ENCODE measurements at regions of chr2 and their contacts with region 1.

Region 1: DNA sequence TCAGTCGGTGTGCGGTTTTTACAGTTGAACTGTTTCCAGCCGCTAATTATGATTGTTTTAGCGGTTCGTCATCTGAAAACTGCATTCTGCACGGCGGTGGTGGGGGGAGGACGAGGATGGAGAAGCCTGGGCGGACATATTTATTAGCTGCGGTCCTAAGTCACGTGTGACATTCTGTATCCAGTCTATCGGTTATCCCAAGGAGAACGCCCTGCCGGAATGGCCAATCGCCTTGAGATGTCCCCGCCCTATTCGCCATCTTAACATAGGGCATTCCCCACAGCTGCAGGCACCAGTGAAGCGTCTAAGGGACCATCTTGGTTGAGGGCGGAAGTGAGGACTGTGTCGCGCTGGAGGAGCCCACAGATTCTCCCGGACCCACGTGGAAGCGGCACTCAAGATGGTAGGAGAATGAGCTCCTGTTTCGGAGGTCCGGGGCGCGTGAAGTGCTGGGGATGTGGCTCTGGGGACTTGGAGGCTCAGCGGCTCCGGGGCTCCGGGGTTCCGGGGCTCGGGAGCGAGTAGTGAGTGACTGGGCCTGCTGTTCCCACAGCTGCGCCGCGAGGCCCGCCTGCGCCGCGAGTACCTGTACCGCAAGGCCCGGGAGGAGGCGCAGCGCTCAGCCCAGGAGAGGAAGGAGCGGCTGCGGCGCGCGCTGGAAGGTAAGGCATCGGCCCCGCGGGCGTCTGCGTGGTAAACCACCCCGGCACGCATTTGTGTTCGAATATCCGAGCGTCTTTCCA is at the start of gene IMP4:
- DNase-seq: peak; percentile 94
- CTCF ChIP-seq: peak; percentile 49

Region 2: DNA sequence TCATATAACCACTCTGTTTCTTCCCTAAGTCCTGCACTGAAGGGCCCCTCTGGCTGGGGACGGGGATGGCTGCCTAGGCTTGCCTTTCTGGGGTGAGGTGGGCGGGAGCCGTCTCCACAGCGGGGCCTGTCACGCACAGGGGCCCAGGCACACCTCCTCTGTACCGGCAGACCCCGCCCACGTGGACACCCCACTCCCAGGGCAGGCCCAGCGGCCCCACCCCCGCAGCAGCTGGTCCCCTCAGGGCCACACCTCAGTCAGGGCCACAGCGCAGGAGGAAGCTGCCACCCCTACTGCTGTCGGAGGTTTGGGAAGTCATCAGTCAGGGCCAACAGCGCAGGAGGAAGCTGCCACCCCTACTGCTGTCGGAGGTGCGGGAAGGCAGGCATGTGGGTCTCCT is 620.9 kb before region 1 on chr2:
- in situ Hi-C with region 1: no loop called
- DNase-seq: no peak
- CTCF ChIP-seq: no peak

Region 3: GRCh38 chr2:130181325-130181879 is 161.3 kb before region 1 on chr2 and contains the start of gene SMPD4:
- in situ Hi-C with region 1: loop called (anchors 25 kb)
- DNase-seq: peak; percentile 93
- CTCF ChIP-seq: no peak

Measured in GM13976 (cell line).